ENCODE measurements at regions of chr10 and their contacts with region 1.

Region 1: DNA sequence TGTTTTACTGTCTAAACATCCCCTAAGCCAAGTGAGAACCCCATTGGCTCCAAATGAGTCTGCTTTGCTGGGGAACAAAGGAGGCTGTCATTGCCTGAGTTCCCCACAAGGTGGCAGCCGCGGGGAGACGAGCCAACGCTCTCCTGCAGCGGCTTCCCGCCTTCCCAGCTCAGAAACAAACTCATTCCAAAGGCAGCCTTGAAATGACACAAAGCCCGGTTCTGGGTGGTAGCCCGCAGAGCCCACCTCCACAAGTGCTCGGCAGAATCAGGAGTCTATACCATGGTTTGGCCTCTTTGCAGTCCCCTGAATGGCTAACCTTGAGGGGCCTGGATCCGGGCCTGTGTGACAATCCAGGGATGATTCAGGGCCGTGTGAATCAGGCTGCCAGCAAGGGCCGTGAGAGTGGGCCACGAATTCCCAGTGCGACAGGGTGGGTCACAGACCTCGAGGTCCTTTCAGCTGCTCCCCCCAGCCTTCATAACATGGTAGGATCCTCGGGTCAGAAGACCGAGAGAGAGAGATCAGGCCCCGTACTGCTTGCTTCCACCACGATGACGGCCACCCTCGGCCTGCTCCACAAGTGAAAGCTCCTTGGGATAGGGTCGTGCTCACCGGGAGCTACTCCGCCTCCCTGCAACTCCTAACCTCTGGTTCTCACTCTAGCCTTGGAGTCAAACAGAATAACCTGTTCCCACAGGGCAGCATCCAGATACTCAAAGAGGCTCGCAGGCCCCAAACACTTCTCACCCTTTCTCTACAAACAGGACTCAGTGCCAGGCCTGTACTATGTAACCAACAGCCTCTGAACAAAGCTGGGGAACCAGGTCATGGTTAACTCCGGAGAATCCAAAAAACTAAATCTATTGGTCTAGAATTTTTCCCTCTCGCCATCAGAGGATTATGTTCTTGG is 79.6 kb downstream of the DLG5 start:
- H3K4me3 ChIP-seq: no peak overlapping the region
- H3K27ac ChIP-seq: peak overlapping the region; percentile 34; the same call in 1 of the 2 replicates
- H3K4me1 ChIP-seq: no peaks in the 10 kb centered on the region
- CTCF ChIP-seq: peak; percentile 70

Region 2: DNA sequence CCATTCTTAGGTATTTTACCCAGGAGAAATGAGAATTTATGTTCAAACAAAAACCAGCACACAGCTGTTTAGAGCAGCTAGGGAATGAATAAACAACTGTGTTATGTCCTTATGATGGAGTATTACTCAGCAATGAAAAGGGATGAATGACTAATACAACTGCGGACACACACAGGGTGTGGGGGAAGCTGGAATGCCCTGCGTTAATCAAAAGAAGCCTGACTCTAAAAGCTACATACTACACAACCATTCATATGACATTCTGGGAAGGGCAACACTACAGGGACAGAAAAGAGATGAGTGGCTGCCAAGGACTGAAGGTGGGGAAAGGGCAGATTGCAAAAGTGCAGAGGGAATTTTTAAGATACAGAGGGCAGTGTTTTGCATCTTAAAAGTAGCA is 15.6 kb after region 1 on chr10:
- CTCF ChIA-PET with region 1: interaction called, 15 read pairs
- POLR2A ChIA-PET with region 1: no interaction called
- H3K4me3 ChIP-seq: no peak overlapping the region
- H3K27ac ChIP-seq: no peak overlapping the region
- H3K4me1 ChIP-seq: no peaks in the 10 kb centered on the region
- CTCF ChIP-seq: no peak

Region 3: DNA sequence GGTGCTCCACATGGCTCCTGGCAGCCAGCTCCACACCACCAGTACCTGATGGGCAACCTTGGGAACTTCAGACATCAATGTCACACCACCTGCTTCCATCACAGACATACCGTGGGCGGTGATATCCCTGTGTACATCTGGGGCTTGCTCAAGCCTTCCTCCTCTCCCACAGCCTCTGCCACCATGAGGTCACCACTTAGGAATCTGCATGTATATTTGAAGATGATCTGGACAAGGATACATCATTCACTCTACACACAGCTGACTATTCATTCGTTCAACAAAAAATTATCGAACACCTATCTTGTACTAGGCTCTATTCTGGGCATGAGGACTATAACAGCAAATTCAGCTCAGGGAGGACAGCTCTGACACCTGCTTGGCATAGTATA is 72.7 kb after region 1 on chr10:
- CTCF ChIA-PET with region 1: interaction called, 10 read pairs
- POLR2A ChIA-PET with region 1: no interaction called
- H3K4me3 ChIP-seq: no peak overlapping the region
- H3K27ac ChIP-seq: no peak overlapping the region
- H3K4me1 ChIP-seq: peaks cover 2% of the 10 kb centered on the region; the same call in 1 of the 2 replicates
- CTCF ChIP-seq: no peak